ENCODE measurements at regions of chr10 and their contacts with region 1.

Region 1: GRCh38 chr10:61673354-61673753 is 10.6 kb downstream of the CABCOCO1 start:
- DNase-seq: no peak
- ATAC-seq: no peak
- H3K4me3 ChIP-seq: no peak overlapping the region
- H3K27ac ChIP-seq: no peak overlapping the region
- H3K4me1 ChIP-seq: no peaks in the 10 kb centered on the region
- H3K27me3 ChIP-seq: no peaks in the 10 kb centered on the region

Region 2: DNA sequence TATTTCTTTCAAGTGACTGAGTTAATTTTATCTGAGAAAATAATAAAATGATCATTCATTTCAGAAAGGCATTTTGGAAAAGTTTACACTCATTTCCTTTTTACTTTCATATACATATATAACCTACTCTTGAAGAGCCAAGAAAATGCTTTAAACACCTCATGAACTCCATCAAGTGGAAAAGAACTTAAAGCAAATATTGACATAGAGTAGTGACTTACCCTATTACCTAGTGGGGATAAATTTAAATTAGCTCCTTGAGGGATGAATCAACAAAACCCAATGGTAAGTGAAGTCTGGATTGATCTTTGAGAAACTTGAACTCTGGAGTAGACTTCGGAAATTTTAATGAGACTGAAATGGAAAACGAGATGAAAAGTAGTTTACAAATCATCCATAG is 308.7 kb before region 1 on chr10:
- intact Hi-C with region 1: loop called in 1 of 2 experiments (anchors 5 kb)
- DNase-seq: no peak
- ATAC-seq: no peak
- H3K4me3 ChIP-seq: no peak overlapping the region
- H3K27ac ChIP-seq: no peak overlapping the region
- H3K4me1 ChIP-seq: no peaks in the 10 kb centered on the region
- H3K27me3 ChIP-seq: no peaks in the 10 kb centered on the region

Region 3: DNA sequence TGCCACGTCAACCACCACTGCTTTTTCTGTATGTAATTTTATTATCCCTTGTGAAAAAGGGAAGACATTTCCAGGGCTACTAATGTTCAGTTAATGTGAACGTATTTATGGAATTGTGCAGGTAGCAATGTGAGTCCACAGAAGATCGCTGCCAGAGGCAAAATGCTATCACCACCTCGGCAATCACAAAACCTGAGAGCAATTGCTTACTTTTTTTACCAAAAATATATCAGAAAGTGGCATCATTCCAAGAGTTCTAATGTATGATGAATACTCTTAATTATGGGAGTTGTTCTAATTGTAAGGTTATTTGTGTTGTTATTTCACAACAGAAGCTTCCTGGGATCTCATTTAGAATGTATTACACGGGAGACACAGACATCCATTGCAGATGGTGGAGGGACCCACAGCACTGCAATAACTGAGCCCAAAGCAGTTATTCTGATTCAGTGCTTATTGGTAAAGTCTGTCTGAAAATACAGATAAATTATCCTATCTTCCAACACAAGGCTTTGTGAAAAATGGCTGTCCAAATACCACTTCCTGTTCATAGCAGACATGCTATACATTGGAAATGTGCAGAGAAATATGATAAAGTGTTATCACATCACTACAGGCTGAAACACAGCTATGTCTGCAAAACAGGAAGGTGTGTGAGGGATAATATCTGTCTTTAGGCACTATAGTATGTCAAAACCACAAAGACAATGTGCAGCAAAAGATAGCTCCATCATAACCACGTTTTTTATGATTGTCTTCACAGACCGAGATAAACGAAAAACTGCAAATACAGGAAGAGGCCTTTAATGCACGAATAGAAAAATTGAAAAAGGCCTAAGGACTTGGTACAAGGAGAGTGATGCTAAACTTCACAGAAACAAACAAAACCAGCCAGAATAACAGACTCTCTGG is 92.1 kb after region 1 on chr10:
- intact Hi-C with region 1: no loop called
- DNase-seq: no peak
- ATAC-seq: no peak
- H3K4me3 ChIP-seq: no peak overlapping the region
- H3K27ac ChIP-seq: no peak overlapping the region
- H3K4me1 ChIP-seq: peaks cover 0 to 1% of the 10 kb centered on the region in 2 donors
- H3K27me3 ChIP-seq: no peaks in the 10 kb centered on the region